H1 (cell line): ENCODE measurements at regions of chr19 and their contacts with region 1.

Region 1: GRCh38 chr19:46537136-46538097 is 41.8 kb upstream of the PNMA8B start:
- DNase-seq: peak in 1 of 2 experiments; percentile 93
- H3K4me3 ChIP-seq: no peak overlapping the region; a peak in 1 of 8 replicates
- H3K27ac ChIP-seq: no peak overlapping the region
- H3K4me1 ChIP-seq: no peaks in the 10 kb centered on the region; a peak in 2 of 7 replicates
- H3K27me3 ChIP-seq: no peaks in the 10 kb centered on the region
- CTCF ChIP-seq: peak; percentile 71 to 97 (median 96)
- EP300 ChIP-seq: no peak
- POLR2A ChIP-seq: no peak
- RAD21 ChIP-seq: peak; percentile 2 to 43; a peak in 3 of 4 replicates

Region 2: DNA sequence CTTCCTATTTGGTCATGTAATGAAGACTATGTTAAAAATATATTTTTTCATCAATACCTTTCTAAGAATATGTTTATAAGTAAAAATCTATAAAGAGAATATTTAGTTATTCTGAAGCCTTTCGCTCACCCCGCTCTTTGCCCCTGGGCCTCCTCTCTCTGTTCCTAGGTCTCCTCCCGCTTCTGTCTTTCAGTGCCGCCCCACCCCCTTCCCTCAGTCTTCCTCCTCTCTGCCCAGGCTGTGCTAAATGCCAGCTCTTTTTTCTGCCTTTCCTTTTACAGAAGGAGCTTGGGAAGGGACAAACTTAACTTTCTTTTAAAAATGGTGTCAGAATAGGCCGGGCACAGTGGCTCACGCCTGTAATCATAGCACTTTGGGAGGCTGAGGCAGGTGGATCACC is 217.8 kb before region 1 on chr19:
- CTCF ChIA-PET with region 1: no interaction called
- POLR2A ChIA-PET with region 1: no interaction called
- DNase-seq: no peak
- H3K4me3 ChIP-seq: no peak overlapping the region
- H3K27ac ChIP-seq: no peak overlapping the region
- H3K4me1 ChIP-seq: no peaks in the 10 kb centered on the region
- H3K27me3 ChIP-seq: no peaks in the 10 kb centered on the region
- CTCF ChIP-seq: no peak
- EP300 ChIP-seq: no peak
- POLR2A ChIP-seq: no peak
- RAD21 ChIP-seq: no peak

Region 3: GRCh38 chr19:46413262-46414031 is 124.0 kb before region 1 on chr19 and contains the start of gene CCDC8:
- CTCF ChIA-PET with region 1: no interaction called
- POLR2A ChIA-PET with region 1: no interaction called
- DNase-seq: peak; percentile 86 to 91
- H3K4me3 ChIP-seq: peak within 1 kb of the TSS; percentile 57 to 88 (median 74)
- H3K27ac ChIP-seq: peak within 1 kb of the TSS; percentile 13; the same call in 1 of the 2 replicates
- H3K4me1 ChIP-seq: peaks cover 3 to 13% (median 10%) of the 10 kb centered on the region in 4 experiments
- H3K27me3 ChIP-seq: peaks cover 0 to 16% (median 7%) of the 10 kb centered on the region in 4 experiments; a peak in 4 of 7 replicates
- CTCF ChIP-seq: no peak
- EP300 ChIP-seq: no peak
- POLR2A ChIP-seq: peak in 1 of 2 experiments; percentile 73; a peak in 2 of 3 replicates
- RAD21 ChIP-seq: no peak
- total RNA-seq, gene CCDC8: 13.6 and 15.1 TPM in 2 replicates

Region 4: DNA sequence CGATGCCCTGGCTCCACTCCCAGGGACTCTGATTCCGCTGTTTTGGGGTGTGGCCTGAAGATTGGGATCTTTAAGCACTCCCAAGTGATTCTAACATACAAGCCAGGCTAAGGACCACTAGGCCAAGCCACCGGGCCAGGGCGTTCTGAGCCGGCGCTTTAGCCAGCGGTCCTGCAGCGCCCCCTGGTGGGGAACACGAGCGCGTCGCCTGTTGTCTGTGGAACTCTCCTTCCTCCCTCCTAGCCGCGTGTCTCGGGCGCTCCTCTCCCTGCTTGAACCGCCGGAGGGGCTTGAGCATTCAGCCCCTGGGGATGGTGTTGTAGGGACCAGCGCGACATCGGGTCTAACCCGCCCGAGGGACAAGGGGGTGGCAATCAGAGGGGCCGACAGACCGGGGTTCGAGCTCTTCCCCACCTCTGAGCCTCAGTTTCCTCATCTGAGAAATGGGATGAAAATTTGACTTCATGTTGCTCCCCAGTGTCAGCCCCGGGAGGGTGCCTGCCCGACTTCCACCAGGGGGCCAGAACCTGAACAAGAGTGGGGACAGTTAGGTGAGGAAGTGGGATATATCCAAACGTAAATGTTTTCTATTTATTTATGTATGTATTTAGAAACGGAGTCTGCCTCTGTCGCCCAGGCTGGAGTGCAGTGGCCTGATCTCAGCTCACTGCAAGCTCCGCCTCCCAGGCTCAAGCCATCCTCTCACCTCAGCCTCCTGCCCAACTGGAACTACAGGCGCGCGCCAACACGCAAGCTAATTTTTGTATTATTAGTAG is 23.8 kb before region 1 on chr19:
- CTCF ChIA-PET with region 1: interaction called, 31 read pairs
- POLR2A ChIA-PET with region 1: interaction called, 5 read pairs
- DNase-seq: peak; percentile 65 to 99
- H3K4me3 ChIP-seq: no peak overlapping the region
- H3K27ac ChIP-seq: no peak overlapping the region
- H3K4me1 ChIP-seq: no peaks in the 10 kb centered on the region
- H3K27me3 ChIP-seq: no peaks in the 10 kb centered on the region
- CTCF ChIP-seq: peak; percentile 87 to 98 (median 91)
- EP300 ChIP-seq: no peak
- POLR2A ChIP-seq: no peak
- RAD21 ChIP-seq: peak; percentile 97 to 99

Region 5: GRCh38 chr19:46520616-46521015 is 16.8 kb before region 1 on chr19:
- CTCF ChIA-PET with region 1: interaction called, 73 read pairs
- POLR2A ChIA-PET with region 1: interaction called, 5 read pairs
- DNase-seq: no peak
- H3K4me3 ChIP-seq: no peak overlapping the region
- H3K27ac ChIP-seq: no peak overlapping the region
- H3K4me1 ChIP-seq: no peaks in the 10 kb centered on the region
- H3K27me3 ChIP-seq: no peaks in the 10 kb centered on the region
- CTCF ChIP-seq: no peak
- EP300 ChIP-seq: no peak
- POLR2A ChIP-seq: no peak
- RAD21 ChIP-seq: no peak

Region 6: GRCh38 chr19:46551164-46551563 is 13.7 kb after region 1 on chr19:
- CTCF ChIA-PET with region 1: interaction called, 100 read pairs
- POLR2A ChIA-PET with region 1: no interaction called
- DNase-seq: no peak
- H3K4me3 ChIP-seq: no peak overlapping the region
- H3K27ac ChIP-seq: no peak overlapping the region
- H3K4me1 ChIP-seq: peaks cover under 1 to 3% (median 2%) of the 10 kb centered on the region in 4 experiments; a peak in 4 of 7 replicates
- H3K27me3 ChIP-seq: no peaks in the 10 kb centered on the region
- CTCF ChIP-seq: no peak
- EP300 ChIP-seq: no peak
- POLR2A ChIP-seq: no peak
- RAD21 ChIP-seq: no peak

Region 7: DNA sequence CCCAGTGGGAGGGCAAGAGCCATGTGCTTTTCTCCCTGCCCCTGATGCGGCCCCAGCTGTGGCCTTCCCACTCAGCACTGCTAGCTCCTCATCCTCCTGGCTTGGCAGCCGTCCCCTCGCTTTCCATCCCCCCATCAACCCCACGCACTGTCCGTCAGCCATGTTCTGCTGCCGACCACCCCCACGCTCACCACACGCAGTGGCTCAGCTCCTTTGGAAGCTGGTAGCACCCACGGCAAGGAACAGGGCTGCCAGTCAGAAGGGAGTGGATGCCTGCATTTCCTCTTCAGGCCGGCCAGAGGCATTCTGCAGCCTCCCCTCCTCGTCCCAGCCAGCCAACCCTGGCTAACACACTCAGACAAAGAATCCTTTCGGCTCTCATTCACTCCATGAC is 70.0 kb after region 1 on chr19:
- CTCF ChIA-PET with region 1: interaction called, 15 read pairs
- POLR2A ChIA-PET with region 1: no interaction called
- DNase-seq: no peak
- H3K4me3 ChIP-seq: no peak overlapping the region
- H3K27ac ChIP-seq: no peak overlapping the region
- H3K4me1 ChIP-seq: peaks cover 0 to 17% (median 7%) of the 10 kb centered on the region in 4 experiments; a peak in 5 of 7 replicates
- H3K27me3 ChIP-seq: no peaks in the 10 kb centered on the region
- CTCF ChIP-seq: no peak
- EP300 ChIP-seq: no peak
- POLR2A ChIP-seq: no peak
- RAD21 ChIP-seq: no peak

Region 8: DNA sequence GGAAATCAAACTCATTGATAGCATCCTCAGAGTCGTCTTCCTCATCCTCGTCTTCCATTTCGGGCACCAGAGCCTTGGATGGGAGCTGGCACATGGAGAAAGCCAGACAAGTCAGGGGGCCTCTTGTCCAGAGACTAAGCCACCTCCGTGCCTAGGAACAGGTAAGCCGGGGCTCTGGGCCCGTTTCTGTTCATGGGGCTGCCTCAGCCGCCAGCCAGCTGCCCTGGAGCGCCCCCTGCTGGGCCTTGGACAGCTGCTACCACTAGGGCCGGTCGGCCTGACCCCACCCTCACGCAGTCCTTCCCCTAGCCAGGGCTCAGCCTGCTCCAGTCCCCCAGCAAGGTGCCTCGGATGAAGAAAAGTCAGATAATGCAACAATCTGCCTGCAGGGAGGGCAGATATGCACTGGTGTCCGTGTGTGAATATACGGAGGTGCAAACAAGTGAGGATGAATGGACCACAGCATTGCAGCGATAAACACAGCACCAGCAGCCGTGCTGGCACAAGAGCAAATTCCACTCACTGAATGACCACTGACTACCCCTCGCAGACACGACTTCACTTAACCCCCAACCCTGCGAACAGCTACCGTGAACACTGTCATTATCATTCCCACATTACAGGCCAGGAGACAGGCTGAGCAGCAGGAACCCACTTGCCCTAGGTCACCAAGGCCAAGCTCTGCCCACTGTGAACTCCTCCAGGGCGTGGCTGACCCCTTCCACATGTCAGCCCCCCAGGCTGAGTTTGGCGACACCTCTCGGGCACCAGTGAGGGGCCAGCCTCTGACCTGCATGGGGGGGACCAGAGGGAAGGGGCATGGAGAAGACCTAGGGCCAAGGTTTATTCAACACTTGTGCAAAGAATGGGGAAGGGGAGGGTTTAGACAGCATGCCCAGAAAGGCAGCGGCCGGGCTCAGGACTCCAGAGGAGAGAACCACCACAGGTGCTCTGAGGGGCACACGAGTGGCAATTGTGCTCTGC is 191.6 kb after region 1 on chr19:
- CTCF ChIA-PET with region 1: no interaction called
- POLR2A ChIA-PET with region 1: no interaction called
- DNase-seq: peak in 1 of 2 experiments; percentile 90
- H3K4me3 ChIP-seq: no peak overlapping the region
- H3K27ac ChIP-seq: no peak overlapping the region
- H3K4me1 ChIP-seq: peaks cover 0 to 3% (median 0%) of the 10 kb centered on the region in 4 experiments; a peak in 4 of 7 replicates
- H3K27me3 ChIP-seq: no peaks in the 10 kb centered on the region
- CTCF ChIP-seq: peak; percentile 81 to 90 (median 89)
- EP300 ChIP-seq: no peak
- POLR2A ChIP-seq: no peak; a peak in 1 of 3 replicates
- RAD21 ChIP-seq: peak; percentile 74 to 81